ENCODE measurements at regions of chr3 and their contacts with region 1.

Region 1: GRCh38 chr3:9302425-9303181 is 53.2 kb upstream of the SRGAP3 start:
- DNase-seq: peak; percentile 66
- ATAC-seq: peak; percentile 100
- H3K4me3 Mint-ChIP-seq: peak overlapping the region; percentile 12
- H3K27ac Mint-ChIP-seq: no peak overlapping the region
- H3K4me1 Mint-ChIP-seq: peaks cover 7% of the 10 kb centered on the region
- H3K27me3 Mint-ChIP-seq: peaks cover 13% of the 10 kb centered on the region
- CTCF ChIP-seq: peak; percentile 59

Region 2: GRCh38 chr3:8441969-8442559 is 860.5 kb before region 1 on chr3:
- CTCF ChIA-PET with region 1: no interaction called
- POLR2A ChIA-PET with region 1: no interaction called
- intact Hi-C with region 1: loop called (anchors 5 kb)
- DNase-seq: no peak
- ATAC-seq: no peak
- H3K4me3 Mint-ChIP-seq: no peak overlapping the region
- H3K27ac Mint-ChIP-seq: no peak overlapping the region
- H3K4me1 Mint-ChIP-seq: no peaks in the 10 kb centered on the region
- H3K27me3 Mint-ChIP-seq: peaks cover 1% of the 10 kb centered on the region
- CTCF ChIP-seq: no peak

Region 3: GRCh38 chr3:8663177-8664061 is 639.2 kb before region 1 on chr3:
- CTCF ChIA-PET with region 1: no interaction called
- POLR2A ChIA-PET with region 1: no interaction called
- intact Hi-C with region 1: loop called (anchors 2 kb)
- DNase-seq: no peak
- ATAC-seq: no peak
- H3K4me3 Mint-ChIP-seq: no peak overlapping the region
- H3K27ac Mint-ChIP-seq: no peak overlapping the region
- H3K4me1 Mint-ChIP-seq: peaks cover 31% of the 10 kb centered on the region
- H3K27me3 Mint-ChIP-seq: peaks cover 2% of the 10 kb centered on the region
- CTCF ChIP-seq: peak; percentile 51

Region 4: DNA sequence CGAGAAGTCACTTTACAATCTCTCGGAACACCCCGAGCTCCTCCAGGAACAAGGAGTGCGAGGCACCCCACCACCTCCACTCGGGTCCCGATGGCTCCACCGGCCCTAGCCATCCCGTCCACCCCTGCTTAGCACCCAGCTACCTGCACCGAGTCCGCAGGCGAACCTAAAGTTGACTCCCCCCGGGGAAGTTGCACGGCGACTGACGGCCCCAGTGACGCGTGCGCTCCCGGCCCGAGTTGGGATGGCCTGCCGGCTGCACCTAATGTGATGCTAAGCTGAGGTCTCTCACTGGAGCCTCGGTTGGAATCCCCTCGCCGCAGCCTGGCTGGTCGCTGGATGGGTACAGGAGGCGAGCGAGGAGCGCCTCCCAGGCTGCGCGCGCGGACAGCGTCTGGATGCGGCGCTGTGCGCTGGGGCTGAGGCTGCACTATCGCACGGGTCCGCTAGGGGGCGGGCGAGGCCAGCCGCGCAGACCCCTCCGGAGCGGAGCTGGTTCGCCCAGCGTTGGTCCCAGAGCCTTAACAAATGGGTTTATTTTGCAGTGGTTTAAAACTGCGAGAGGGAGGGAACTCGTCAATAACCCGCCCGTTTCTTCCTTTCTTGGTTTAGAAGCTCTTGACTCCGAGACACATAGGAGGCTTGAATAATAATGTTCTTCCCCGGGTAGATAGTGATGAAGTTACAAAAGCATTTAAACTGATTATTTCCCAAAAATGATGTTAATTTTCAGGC is 533.3 kb before region 1 on chr3 and contains the start of gene OXTR:
- CTCF ChIA-PET with region 1: no interaction called
- POLR2A ChIA-PET with region 1: no interaction called
- intact Hi-C with region 1: loop called (anchors 1 kb)
- DNase-seq: peak; percentile 64
- ATAC-seq: peak; percentile 89
- H3K4me3 Mint-ChIP-seq: peak within 1 kb of the TSS; percentile 79
- H3K27ac Mint-ChIP-seq: no peak within 1 kb of the TSS
- H3K4me1 Mint-ChIP-seq: peaks cover 21% of the 10 kb centered on the region
- H3K27me3 Mint-ChIP-seq: peaks cover 41% of the 10 kb centered on the region
- CTCF ChIP-seq: no peak
- total RNA-seq, gene OXTR: 2.0 and 2.5 TPM in 2 replicates

Region 5: GRCh38 chr3:8938021-8938420 is 364.6 kb before region 1 on chr3:
- CTCF ChIA-PET with region 1: no interaction called
- POLR2A ChIA-PET with region 1: no interaction called
- intact Hi-C with region 1: loop called (anchors 1 kb)
- DNase-seq: no peak
- ATAC-seq: no peak
- H3K4me3 Mint-ChIP-seq: no peak overlapping the region
- H3K27ac Mint-ChIP-seq: no peak overlapping the region
- H3K4me1 Mint-ChIP-seq: no peaks in the 10 kb centered on the region
- H3K27me3 Mint-ChIP-seq: no peaks in the 10 kb centered on the region
- CTCF ChIP-seq: no peak

Region 6: GRCh38 chr3:8970971-8971589 is 331.5 kb before region 1 on chr3:
- CTCF ChIA-PET with region 1: interaction called, 93 read pairs
- POLR2A ChIA-PET with region 1: no interaction called
- intact Hi-C with region 1: loop called (anchors 1 kb)
- DNase-seq: peak; percentile 47
- ATAC-seq: peak; percentile 91
- H3K4me3 Mint-ChIP-seq: no peak overlapping the region
- H3K27ac Mint-ChIP-seq: no peak overlapping the region
- H3K4me1 Mint-ChIP-seq: peaks cover 4% of the 10 kb centered on the region
- H3K27me3 Mint-ChIP-seq: peaks cover 15% of the 10 kb centered on the region
- CTCF ChIP-seq: peak; percentile 94

Region 7: DNA sequence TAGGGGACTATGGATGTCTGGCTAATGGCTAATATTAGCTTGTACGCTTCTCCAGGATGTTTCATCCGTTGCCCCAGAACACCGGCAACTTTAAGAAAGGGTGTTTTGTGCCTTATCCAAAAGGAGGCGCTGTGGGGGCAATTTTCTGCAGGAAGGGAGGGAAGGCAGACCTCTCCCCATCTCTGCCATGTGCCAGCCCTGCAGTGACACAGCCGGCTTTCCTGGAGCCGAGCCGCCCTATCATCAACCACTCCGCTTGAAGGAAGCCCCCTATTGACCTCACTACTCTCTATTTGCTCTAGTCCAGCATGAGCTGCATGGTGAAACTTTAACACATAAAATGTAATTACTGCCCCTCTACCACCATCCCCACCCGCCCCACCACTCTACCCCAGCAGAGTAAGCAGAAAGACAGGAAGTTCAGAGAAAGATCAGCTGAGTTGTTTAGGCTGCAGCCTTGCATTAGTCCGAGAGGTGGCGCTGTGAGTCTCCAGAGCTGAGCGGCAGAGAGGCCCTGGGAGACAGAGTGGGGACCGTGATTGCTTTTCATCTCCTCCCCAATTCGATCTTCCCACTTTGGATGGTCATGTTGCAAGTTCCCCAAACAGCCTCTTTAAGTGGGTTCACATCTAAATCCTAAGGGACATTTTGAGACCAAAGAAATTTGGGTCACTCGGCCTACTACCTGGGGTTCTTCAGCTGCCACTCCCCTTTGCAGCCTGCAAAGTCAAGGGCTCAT is 314.8 kb before region 1 on chr3:
- CTCF ChIA-PET with region 1: interaction called, 16 read pairs
- POLR2A ChIA-PET with region 1: no interaction called
- intact Hi-C with region 1: loop called (anchors 1 kb)
- DNase-seq: no peak
- ATAC-seq: peak; percentile 83
- H3K4me3 Mint-ChIP-seq: peak overlapping the region; percentile 58
- H3K27ac Mint-ChIP-seq: no peak overlapping the region
- H3K4me1 Mint-ChIP-seq: peaks cover 5% of the 10 kb centered on the region
- H3K27me3 Mint-ChIP-seq: peaks cover 2% of the 10 kb centered on the region
- CTCF ChIP-seq: no peak

Region 8: GRCh38 chr3:9224490-9224889 is 78.1 kb before region 1 on chr3:
- CTCF ChIA-PET with region 1: no interaction called
- POLR2A ChIA-PET with region 1: no interaction called
- intact Hi-C with region 1: no loop called
- DNase-seq: no peak
- ATAC-seq: no peak
- H3K4me3 Mint-ChIP-seq: no peak overlapping the region
- H3K27ac Mint-ChIP-seq: no peak overlapping the region
- H3K4me1 Mint-ChIP-seq: no peaks in the 10 kb centered on the region
- H3K27me3 Mint-ChIP-seq: peaks cover 6% of the 10 kb centered on the region
- CTCF ChIP-seq: no peak

Measured in activated B cell treated with CpG ODN at 0.5 μM for 24 hours (primary cell).